ENCODE measurements at regions of chr1 and their contacts with region 1.

Region 1: DNA sequence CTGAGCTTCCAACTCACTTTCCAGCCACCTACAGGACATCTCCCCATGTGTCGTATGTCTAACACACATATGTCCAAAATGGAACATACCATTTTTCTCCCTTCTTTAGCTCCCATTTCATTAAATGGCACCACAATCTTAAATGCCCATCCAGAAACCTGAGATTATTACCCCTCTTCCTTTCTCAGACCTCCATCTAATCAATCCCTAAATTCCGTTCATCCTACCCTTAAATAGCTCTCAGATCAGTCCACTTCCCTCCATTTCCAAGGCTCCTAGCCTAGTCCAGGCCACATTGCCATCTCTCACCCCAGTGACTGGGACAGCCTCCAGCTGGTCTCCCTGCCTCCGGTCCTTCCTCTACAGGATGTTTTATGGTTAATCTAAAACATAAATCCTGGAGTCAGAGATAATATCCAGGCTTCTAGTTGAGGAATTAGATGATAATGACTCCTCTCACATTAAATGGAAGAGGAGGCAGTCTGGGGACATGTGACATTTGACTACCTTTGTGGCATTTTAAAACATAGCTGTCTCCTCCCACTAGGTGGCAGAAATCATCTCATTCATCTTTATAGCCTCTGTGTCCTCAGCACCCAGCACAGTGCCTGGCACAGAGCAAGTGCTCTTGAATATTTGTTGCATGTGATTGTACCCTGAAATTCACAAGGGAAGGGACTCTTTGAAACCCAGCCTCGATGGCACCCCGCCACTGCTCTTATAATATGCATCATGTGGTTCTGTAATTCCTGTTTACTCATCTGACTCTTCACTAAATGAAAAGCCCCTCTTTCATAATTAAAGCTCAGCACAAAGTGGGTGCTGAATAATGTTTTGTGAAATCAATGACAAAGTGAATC is 102.3 kb downstream of the TMEM53 start:
- DNase-seq: peak; percentile 33
- H3K4me3 Mint-ChIP-seq: no peak overlapping the region
- H3K27ac Mint-ChIP-seq: no peak overlapping the region
- H3K4me1 Mint-ChIP-seq: no peaks in the 10 kb centered on the region
- H3K27me3 Mint-ChIP-seq: peaks cover 32% of the 10 kb centered on the region

Region 2: GRCh38 chr1:44557778-44558177 is 14.2 kb before region 1 on chr1:
- CTCF ChIA-PET with region 1: interaction called, 12 read pairs
- DNase-seq: no peak
- H3K4me3 Mint-ChIP-seq: no peak overlapping the region
- H3K27ac Mint-ChIP-seq: no peak overlapping the region
- H3K4me1 Mint-ChIP-seq: peaks cover 9% of the 10 kb centered on the region
- H3K27me3 Mint-ChIP-seq: peaks cover 36% of the 10 kb centered on the region

Region 3: GRCh38 chr1:44584167-44584566 is 12.2 kb after region 1 on chr1:
- CTCF ChIA-PET with region 1: interaction called, 12 read pairs
- DNase-seq: no peak
- H3K4me3 Mint-ChIP-seq: no peak overlapping the region
- H3K27ac Mint-ChIP-seq: no peak overlapping the region
- H3K4me1 Mint-ChIP-seq: no peaks in the 10 kb centered on the region
- H3K27me3 Mint-ChIP-seq: peaks cover 4% of the 10 kb centered on the region

Region 4: DNA sequence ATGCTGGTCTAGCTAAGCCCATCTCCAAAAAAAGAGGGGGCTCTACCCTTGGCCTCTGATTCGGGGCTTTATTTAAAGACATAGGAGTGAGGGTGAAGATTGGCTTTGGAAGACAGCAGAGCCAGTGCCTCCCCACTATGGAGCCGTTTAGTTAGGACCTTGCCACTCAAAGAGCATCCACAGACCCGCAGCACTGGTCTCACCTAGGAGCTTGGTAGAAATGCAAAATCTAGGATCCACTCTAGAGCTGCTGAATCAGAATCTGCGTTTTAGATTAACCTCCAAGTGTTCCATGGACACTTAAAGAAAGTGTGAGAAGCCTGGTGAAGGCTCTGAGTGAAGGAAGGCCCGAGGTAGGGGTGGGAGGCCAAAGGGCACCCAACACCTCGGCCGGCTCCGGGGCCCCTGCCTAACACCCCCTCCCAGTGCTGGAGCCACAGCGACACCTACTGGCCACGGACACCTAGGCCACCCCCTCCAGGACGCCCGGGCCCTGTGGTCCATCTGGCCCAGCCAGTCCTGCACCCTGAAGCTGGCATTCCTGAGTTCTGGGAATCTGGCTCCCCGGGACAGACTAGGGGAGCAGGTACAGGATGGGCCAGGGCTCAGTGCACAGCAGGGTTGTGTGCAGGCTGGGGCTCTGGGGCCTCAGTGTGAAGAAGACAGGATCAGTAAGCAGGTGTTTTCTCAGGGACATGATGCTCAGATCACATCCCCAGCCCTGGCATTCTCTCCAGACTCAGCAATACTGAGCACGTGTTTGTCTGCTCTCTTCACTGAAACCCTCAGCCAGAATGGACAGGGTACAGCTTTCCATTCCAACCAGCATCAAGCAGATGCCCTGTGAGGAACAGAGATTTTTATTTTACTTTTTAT is 23.2 kb after region 1 on chr1:
- CTCF ChIA-PET with region 1: interaction called, 13 read pairs
- DNase-seq: peak; percentile 84
- H3K4me3 Mint-ChIP-seq: no peak overlapping the region
- H3K27ac Mint-ChIP-seq: no peak overlapping the region
- H3K4me1 Mint-ChIP-seq: no peaks in the 10 kb centered on the region
- H3K27me3 Mint-ChIP-seq: peaks cover 16% of the 10 kb centered on the region

Region 5: GRCh38 chr1:44894591-44894990 is 322.6 kb after region 1 on chr1:
- CTCF ChIA-PET with region 1: no interaction called
- DNase-seq: no peak
- H3K4me3 Mint-ChIP-seq: no peak overlapping the region
- H3K27ac Mint-ChIP-seq: no peak overlapping the region
- H3K4me1 Mint-ChIP-seq: no peaks in the 10 kb centered on the region
- H3K27me3 Mint-ChIP-seq: no peaks in the 10 kb centered on the region

Measured in activated naive CD4-positive, alpha-beta T cell treated with anti-CD3 and anti-CD28 coated beads, Interleukin-2, amount 10 ng/mL, durations not matched to agents 7 days and 5 days (primary cell).